ENCODE measurements at regions of chr1 and their contacts with region 1.

Region 1: DNA sequence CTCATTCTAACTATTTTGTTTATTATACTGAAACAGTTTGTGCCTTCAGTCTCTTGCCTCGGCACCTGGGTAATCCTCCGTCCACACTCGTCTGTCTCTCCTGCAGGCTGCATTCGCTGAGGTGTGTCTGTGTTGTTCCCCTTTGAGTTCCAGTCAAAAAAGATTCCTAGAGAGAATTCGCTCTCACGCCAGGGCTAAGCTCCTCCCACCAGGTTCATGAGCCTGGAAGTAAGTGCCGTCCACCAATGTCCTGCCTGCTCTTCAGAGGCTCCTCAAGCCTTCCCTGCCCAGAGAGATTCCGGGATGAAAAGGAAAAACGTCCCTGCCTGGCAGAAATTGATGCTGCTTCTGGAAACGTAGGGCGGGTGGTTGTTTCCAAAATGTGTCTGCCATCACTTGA is 12.9 kb downstream of the KIAA2013 start:
- DNase-seq: no peak
- ATAC-seq: no peak
- H3K4me3 ChIP-seq: no peak overlapping the region
- H3K27ac ChIP-seq: no peak overlapping the region
- H3K4me1 ChIP-seq: peaks cover 18 to 21% of the 10 kb centered on the region in 2 experiments
- H3K27me3 ChIP-seq: no peaks in the 10 kb centered on the region
- CTCF ChIP-seq: no peak
- EP300 ChIP-seq: no peak
- POLR2A ChIP-seq: no peak
- RAD21 ChIP-seq: no peak

Region 2: GRCh38 chr1:11563560-11564069 is 349.7 kb before region 1 on chr1:
- CTCF ChIA-PET with region 1: no interaction called
- POLR2A ChIA-PET with region 1: no interaction called
- in situ Hi-C with region 1: no loop called
- intact Hi-C with region 1: no loop called
- DNase-seq: peak in 1 of 4 experiments; percentile 30
- ATAC-seq: peak; percentile 69
- H3K4me3 ChIP-seq: no peak overlapping the region
- H3K27ac ChIP-seq: no peak overlapping the region
- H3K4me1 ChIP-seq: peaks cover 0 to 14% of the 10 kb centered on the region in 2 experiments; a peak in 3 of 5 replicates
- H3K27me3 ChIP-seq: peaks cover 15 to 44% of the 10 kb centered on the region in 2 experiments
- CTCF ChIP-seq: no peak
- EP300 ChIP-seq: no peak
- POLR2A ChIP-seq: no peak
- RAD21 ChIP-seq: no peak

Region 3: GRCh38 chr1:11925938-11926292 is 12.6 kb after region 1 on chr1:
- CTCF ChIA-PET with region 1: no interaction called
- POLR2A ChIA-PET with region 1: interaction called, 236 read pairs
- in situ Hi-C with region 1: no loop called
- intact Hi-C with region 1: no loop called
- DNase-seq: peak in 1 of 4 experiments; percentile 49
- ATAC-seq: peak; percentile 12
- H3K4me3 ChIP-seq: peak overlapping the region; percentile 71
- H3K27ac ChIP-seq: peak overlapping the region; percentile 50; the same call in 2 of the 3 replicates
- H3K4me1 ChIP-seq: peaks cover 28 to 58% of the 10 kb centered on the region in 2 experiments
- H3K27me3 ChIP-seq: no peaks in the 10 kb centered on the region
- CTCF ChIP-seq: no peak
- EP300 ChIP-seq: no peak
- POLR2A ChIP-seq: no peak
- RAD21 ChIP-seq: no peak

Region 4: DNA sequence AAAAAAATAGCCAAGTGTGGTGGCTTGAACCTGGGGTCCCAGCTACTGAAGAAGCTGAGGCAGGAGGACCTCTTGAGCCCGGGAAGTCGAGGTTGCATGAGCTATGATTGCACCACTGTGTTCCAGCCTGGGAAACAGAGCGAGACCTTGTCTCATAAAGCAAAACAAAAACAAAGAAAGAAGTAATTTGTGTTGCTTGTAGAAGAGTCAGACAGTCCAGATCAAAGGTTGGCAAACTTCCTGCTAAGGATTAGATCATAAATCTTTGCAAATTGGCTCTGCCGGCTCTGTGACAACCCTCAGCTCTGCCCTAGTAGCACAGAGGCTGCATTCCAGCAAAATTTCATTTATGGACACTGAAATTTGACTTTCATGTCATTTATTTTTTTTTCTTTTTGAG is 47.9 kb after region 1 on chr1:
- CTCF ChIA-PET with region 1: no interaction called
- POLR2A ChIA-PET with region 1: interaction called, 112 read pairs
- in situ Hi-C with region 1: loop called (anchors 5 kb)
- intact Hi-C with region 1: no loop called
- DNase-seq: no peak
- ATAC-seq: no peak
- H3K4me3 ChIP-seq: no peak overlapping the region
- H3K27ac ChIP-seq: no peak overlapping the region
- H3K4me1 ChIP-seq: peaks cover 0 to 10% of the 10 kb centered on the region in 2 experiments; a peak in 1 of 5 replicates
- H3K27me3 ChIP-seq: no peaks in the 10 kb centered on the region
- CTCF ChIP-seq: no peak
- EP300 ChIP-seq: no peak
- POLR2A ChIP-seq: no peak
- RAD21 ChIP-seq: no peak

Measured in K562 (cell line).